ENCODE measurements at regions of chr15 and their contacts with region 1.

Region 1: DNA sequence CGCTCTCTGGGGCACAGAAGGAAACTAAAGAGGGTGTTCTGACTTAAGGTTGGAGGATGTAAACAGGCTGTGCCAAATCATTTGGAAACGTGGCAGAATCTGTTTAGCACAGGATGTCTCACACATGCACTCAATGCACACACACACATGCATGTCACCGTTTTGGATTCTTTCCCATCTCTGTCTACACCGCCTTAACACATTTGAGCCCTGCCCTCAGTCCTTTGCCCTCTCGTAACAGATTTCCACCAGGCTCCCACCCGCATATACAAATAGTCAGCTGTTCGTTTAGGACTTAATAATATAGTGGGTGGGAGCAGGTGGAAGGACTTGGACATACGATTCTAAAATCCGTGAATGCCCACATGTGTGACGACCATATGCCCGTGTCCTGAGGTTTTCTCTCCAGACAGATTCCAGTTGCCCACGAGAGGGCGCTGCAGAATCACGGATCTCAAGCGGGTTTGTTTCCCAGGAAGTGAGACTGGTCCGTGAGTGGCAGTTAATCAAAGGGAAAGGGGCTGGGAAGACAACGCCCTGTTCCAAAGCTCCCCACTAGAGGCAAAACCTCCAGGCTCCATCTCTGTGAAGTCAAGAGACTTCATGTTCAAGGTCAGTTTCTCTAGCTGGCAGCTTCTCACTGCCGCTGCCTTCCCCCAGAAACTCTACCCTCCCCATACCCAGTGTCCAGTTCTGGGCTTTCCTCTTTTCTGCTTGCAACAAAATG is 44.5 kb downstream of the NOX5 start:
- DNase-seq: peak; percentile 77
- H3K4me3 Mint-ChIP-seq: no peak overlapping the region
- H3K27ac Mint-ChIP-seq: no peak overlapping the region
- H3K4me1 Mint-ChIP-seq: peaks cover 24% of the 10 kb centered on the region
- H3K27me3 Mint-ChIP-seq: peaks cover 8% of the 10 kb centered on the region

Region 2: DNA sequence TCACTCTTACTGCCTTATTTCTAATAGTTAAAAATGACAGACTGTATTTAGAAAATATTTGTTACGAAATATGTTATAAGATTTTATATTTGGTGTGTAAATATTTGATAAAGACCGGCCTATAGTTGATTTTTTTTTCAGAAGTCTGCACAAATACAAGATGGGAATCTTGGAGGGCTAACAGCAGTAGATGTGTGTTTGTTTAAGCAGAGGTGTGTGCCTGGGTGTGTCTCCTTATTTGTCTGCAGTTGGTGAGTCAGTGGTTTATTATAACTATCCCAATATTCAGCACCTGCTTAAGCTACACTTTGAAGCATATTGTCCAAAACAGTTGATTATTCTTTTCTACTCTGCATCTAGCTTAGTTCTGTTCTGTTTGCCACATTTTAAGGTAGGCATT is 113.8 kb after region 1 on chr15:
- CTCF ChIA-PET with region 1: no interaction called
- POLR2A ChIA-PET with region 1: no interaction called
- DNase-seq: no peak
- H3K4me3 Mint-ChIP-seq: no peak overlapping the region
- H3K27ac Mint-ChIP-seq: no peak overlapping the region
- H3K4me1 Mint-ChIP-seq: no peaks in the 10 kb centered on the region
- H3K27me3 Mint-ChIP-seq: no peaks in the 10 kb centered on the region

Region 3: GRCh38 chr15:69328739-69329138 is 269.7 kb after region 1 on chr15:
- CTCF ChIA-PET with region 1: no interaction called
- POLR2A ChIA-PET with region 1: no interaction called
- DNase-seq: no peak
- H3K4me3 Mint-ChIP-seq: no peak overlapping the region
- H3K27ac Mint-ChIP-seq: no peak overlapping the region
- H3K4me1 Mint-ChIP-seq: no peaks in the 10 kb centered on the region
- H3K27me3 Mint-ChIP-seq: peaks cover 12% of the 10 kb centered on the region

Region 4: DNA sequence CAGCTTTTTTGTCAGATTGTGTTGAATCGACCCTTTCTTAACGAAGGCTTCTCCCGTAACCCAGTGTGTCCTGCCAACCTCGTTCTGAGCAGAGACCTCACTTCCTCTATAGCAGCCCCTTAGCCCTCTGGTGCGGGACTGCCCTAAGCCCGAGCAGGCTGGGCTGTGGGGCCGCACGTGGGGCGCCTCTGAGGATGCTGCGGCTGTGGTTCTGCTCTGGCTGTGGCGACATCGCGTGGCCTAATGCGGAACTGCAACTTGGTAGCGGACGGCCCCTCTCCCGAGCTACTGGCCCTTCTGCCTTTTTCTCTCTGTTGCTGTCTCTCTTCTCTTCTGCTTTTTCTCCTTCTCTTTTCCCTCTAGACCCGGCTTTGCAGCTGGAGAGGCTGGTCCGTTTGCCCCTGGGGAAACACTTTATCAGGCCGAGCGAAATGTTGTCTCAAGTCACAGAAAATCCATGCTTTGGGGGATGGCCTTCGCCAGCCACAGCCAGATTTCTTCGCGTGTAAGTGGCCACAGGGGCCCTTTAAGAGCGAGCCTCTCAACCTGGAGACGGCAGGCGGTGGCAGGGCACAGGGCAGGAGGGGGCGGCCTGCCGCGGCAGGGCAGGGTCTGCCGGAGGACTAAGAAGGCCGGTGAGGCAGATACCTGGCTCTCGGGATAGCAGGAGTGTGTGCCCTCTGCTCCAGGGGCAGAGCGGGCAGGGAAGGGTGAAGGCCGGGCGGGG is 335.7 kb after region 1 on chr15:
- CTCF ChIA-PET with region 1: interaction called, 15 read pairs
- POLR2A ChIA-PET with region 1: no interaction called
- DNase-seq: peak; percentile 80
- H3K4me3 Mint-ChIP-seq: no peak overlapping the region
- H3K27ac Mint-ChIP-seq: no peak overlapping the region
- H3K4me1 Mint-ChIP-seq: peaks cover 4% of the 10 kb centered on the region
- H3K27me3 Mint-ChIP-seq: peaks cover 12% of the 10 kb centered on the region

Measured in activated CD4-positive, alpha-beta memory T cell treated with anti-CD3 and anti-CD28 coated beads, Interleukin-2, amount 10 ng/mL, durations not matched to agents 7 days and 5 days (primary cell).